Gastrocnemius medialis (tissue), 4 donors: ENCODE measurements at regions of chr6 and their contacts with region 1.

Region 1: DNA sequence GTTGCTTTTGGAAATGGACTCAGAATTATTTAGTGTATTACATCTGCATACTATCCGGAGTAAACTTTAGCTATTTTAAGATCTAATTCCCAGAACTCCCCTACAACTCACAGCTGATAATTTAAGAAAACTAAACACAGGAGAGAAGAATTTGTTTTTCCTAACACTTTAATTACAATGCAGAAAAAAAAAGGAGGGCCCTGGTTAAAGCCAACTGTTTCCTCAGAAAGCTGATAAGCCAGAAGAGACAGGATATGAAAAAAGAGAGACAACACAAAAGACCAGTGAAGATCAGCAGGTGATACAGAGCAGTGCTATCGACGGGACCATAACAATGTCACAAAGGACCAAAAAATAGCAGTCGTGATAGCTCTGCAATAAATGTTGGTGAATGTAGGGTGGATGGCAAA is 5.8 kb downstream of the IFNGR1 start:
- DNase-seq: no peak
- ATAC-seq: no peak
- H3K4me3 ChIP-seq: peak overlapping the region; percentile 13 to 89 (median 20)
- H3K27ac ChIP-seq: peak overlapping the region; percentile 31 to 98 (median 68)
- H3K4me1 ChIP-seq: peaks cover 74 to 79% of the 10 kb centered on the region in 2 donors
- H3K27me3 ChIP-seq: no peaks in the 10 kb centered on the region
- CTCF ChIP-seq: no peak
- POLR2A ChIP-seq: no peak

Region 2: GRCh38 chr6:137148306-137149034 is 64.9 kb before region 1 on chr6:
- in situ Hi-C with region 1: no loop called
- intact Hi-C with region 1: loop called (anchors 2 kb)
- DNase-seq: peak; percentile 10 to 35
- ATAC-seq: peak; percentile 72 to 77
- H3K4me3 ChIP-seq: no peak overlapping the region
- H3K27ac ChIP-seq: peak overlapping the region in 3 of 4 donors; percentile 36 to 64 (median 44)
- H3K4me1 ChIP-seq: no peaks in the 10 kb centered on the region
- H3K27me3 ChIP-seq: no peaks in the 10 kb centered on the region
- CTCF ChIP-seq: no peak
- POLR2A ChIP-seq: no peak

Region 3: DNA sequence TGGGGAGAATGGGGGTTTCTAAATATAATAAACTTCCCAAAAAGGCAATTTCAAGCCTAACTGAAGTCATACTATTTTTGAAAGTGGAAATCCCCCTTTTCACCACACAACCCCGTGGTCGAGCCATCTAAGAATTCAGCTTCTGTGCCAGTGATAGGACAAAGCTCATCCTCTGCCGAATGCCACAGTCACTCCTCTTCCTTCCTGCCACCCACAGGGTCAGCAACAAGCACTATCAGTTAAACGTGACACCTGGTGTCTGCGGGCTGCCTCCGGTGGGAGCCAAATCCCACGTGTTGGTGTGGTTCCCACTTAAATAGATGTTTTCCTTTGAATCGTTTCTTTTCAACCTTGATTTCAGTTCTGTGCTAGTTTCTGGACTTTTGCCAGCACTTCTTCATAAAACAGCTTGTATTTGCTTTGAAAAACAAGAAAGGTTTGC is 714.5 kb after region 1 on chr6:
- in situ Hi-C with region 1: no loop called
- intact Hi-C with region 1: no loop called
- DNase-seq: no peak
- ATAC-seq: no peak
- H3K4me3 ChIP-seq: no peak overlapping the region
- H3K27ac ChIP-seq: no peak overlapping the region
- H3K4me1 ChIP-seq: peaks cover 21 to 26% of the 10 kb centered on the region in 2 donors
- H3K27me3 ChIP-seq: no peaks in the 10 kb centered on the region
- CTCF ChIP-seq: no peak
- POLR2A ChIP-seq: no peak